CD8-positive, alpha-beta T cell (primary cell): ENCODE measurements at regions of chr4 and their contacts with region 1.

Region 1: DNA sequence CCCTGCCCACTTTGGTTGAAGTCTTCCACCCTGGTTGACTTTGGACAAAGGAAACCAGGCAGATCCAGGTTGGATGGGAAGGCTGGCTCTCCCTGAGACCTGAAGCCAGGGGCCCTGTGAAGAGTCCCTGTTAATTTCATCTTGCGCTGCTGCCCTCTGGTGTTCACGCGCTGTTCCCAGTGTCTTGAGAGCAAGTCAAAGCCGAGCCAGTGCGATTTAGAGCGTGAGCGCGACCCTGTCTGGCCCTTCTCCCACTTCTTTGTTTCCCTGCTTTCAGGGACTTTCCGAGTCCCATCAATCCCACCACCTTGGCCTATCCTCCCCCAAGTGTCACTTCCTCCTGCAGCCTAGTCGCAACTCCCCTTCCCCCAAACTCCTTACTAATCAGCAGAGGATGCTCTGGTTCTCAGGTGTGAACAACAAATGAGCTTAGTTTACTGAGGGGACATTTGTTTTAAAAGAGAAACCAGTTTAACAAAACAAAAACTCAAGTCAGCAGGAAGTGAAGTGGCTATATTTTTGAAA is 25.8 kb upstream of the CHRNA9 start:
- DNase-seq: peak; percentile 84 to 97 (median 92)
- ATAC-seq: peak; percentile 55
- H3K4me3 ChIP-seq: peak overlapping the region; percentile 28 to 38
- H3K4me3 Mint-ChIP-seq: peak overlapping the region; percentile 74
- H3K27ac ChIP-seq: peak overlapping the region; percentile 71 to 96
- H3K27ac Mint-ChIP-seq: peak overlapping the region; percentile 99
- H3K4me1 ChIP-seq: peaks cover 78% of the 10 kb centered on the region
- H3K4me1 Mint-ChIP-seq: peaks cover 82% of the 10 kb centered on the region
- H3K27me3 ChIP-seq: no peaks in the 10 kb centered on the region
- H3K27me3 Mint-ChIP-seq: no peaks in the 10 kb centered on the region
- CTCF ChIP-seq: peak; percentile 86

Region 2: GRCh38 chr4:40199999-40200874 is 109.1 kb before region 1 on chr4:
- CTCF ChIA-PET with region 1: interaction called, 59 read pairs
- POLR2A ChIA-PET with region 1: interaction called, 33 read pairs
- intact Hi-C with region 1: loop called in 1 of 2 experiments (anchors 1 kb)
- DNase-seq: peak in 7 of 9 experiments; percentile 41 to 88 (median 67)
- ATAC-seq: peak; percentile 24
- H3K4me3 ChIP-seq: peak overlapping the region; percentile 83 to 87
- H3K4me3 Mint-ChIP-seq: peak overlapping the region; percentile 100
- H3K27ac ChIP-seq: peak overlapping the region; percentile 89 to 96
- H3K27ac Mint-ChIP-seq: peak overlapping the region; percentile 100
- H3K4me1 ChIP-seq: peaks cover 25% of the 10 kb centered on the region
- H3K4me1 Mint-ChIP-seq: peaks cover 41% of the 10 kb centered on the region
- H3K27me3 ChIP-seq: no peaks in the 10 kb centered on the region
- H3K27me3 Mint-ChIP-seq: no peaks in the 10 kb centered on the region
- CTCF ChIP-seq: no peak

Region 3: DNA sequence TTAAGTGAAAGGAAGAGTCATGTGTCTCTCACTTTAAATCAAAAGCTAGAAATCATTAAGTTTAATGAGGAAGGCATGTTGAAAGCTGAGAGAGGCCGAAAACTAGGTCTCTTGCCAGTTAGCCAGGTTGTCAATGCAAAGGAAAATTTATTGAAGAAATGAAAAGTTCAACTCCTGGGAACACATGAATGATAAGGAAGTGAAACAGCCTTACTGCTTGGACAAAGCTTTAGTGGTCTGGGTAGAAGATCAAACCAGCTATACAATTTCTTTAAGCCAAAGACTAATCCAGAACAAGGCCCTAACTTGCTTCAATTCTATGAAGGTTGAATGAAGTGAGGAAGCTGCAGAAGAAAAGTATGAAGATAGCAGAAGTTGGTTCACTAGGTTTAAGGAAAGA is 87.6 kb before region 1 on chr4:
- CTCF ChIA-PET with region 1: interaction called, 118 read pairs
- POLR2A ChIA-PET with region 1: interaction called, 21 read pairs
- intact Hi-C with region 1: no loop called
- DNase-seq: no peak
- ATAC-seq: no peak
- H3K4me3 ChIP-seq: no peak overlapping the region
- H3K4me3 Mint-ChIP-seq: peak overlapping the region; percentile 71
- H3K27ac ChIP-seq: peak overlapping the region in 1 of 2 experiments; percentile 96
- H3K27ac Mint-ChIP-seq: peak overlapping the region; percentile 87
- H3K4me1 ChIP-seq: peaks cover 97% of the 10 kb centered on the region
- H3K4me1 Mint-ChIP-seq: peaks cover 93% of the 10 kb centered on the region
- H3K27me3 ChIP-seq: no peaks in the 10 kb centered on the region
- H3K27me3 Mint-ChIP-seq: no peaks in the 10 kb centered on the region
- CTCF ChIP-seq: no peak

Region 4: DNA sequence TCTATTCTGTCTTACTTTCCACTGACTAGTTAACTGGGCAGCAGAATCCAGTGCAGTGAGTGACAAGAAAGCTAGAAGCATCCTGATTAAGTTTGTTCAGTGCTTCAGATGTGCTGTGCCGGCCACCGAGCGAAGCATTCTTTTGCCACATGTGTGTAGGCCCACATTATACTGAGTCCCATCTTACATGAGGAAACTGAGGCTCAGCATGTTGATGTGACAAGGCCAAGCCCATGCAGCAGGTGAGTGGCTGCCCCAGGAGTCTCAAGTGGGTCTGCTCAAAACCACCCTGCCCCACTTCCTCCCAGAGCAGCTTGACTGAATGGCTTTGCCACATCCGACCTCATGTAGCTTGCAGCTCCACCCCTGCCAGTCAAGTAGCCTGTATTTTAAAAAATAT is 62.0 kb before region 1 on chr4:
- CTCF ChIA-PET with region 1: interaction called, 42 read pairs
- POLR2A ChIA-PET with region 1: interaction called, 11 read pairs
- intact Hi-C with region 1: loop called (anchors 1 to 2 kb)
- DNase-seq: peak; percentile 39 to 88 (median 72)
- ATAC-seq: peak; percentile 71
- H3K4me3 ChIP-seq: no peak overlapping the region
- H3K4me3 Mint-ChIP-seq: peak overlapping the region; percentile 36
- H3K27ac ChIP-seq: peak overlapping the region; percentile 52 to 98
- H3K27ac Mint-ChIP-seq: peak overlapping the region; percentile 90
- H3K4me1 ChIP-seq: peaks cover 76% of the 10 kb centered on the region
- H3K4me1 Mint-ChIP-seq: peaks cover 82% of the 10 kb centered on the region
- H3K27me3 ChIP-seq: no peaks in the 10 kb centered on the region
- H3K27me3 Mint-ChIP-seq: no peaks in the 10 kb centered on the region
- CTCF ChIP-seq: no peak

Region 5: GRCh38 chr4:40275065-40275730 is 34.1 kb before region 1 on chr4:
- CTCF ChIA-PET with region 1: interaction called, 11 read pairs
- POLR2A ChIA-PET with region 1: interaction called, 4 read pairs
- intact Hi-C with region 1: no loop called
- DNase-seq: peak in 1 of 9 experiments; percentile 39
- ATAC-seq: peak; percentile 44
- H3K4me3 ChIP-seq: no peak overlapping the region
- H3K4me3 Mint-ChIP-seq: peak overlapping the region; percentile 37
- H3K27ac ChIP-seq: peak overlapping the region in 1 of 2 experiments; percentile 27
- H3K27ac Mint-ChIP-seq: peak overlapping the region; percentile 87
- H3K4me1 ChIP-seq: peaks cover 31% of the 10 kb centered on the region
- H3K4me1 Mint-ChIP-seq: peaks cover 46% of the 10 kb centered on the region
- H3K27me3 ChIP-seq: no peaks in the 10 kb centered on the region
- H3K27me3 Mint-ChIP-seq: no peaks in the 10 kb centered on the region
- CTCF ChIP-seq: no peak

Region 6: GRCh38 chr4:40325189-40326019 is 16.1 kb after region 1 on chr4:
- CTCF ChIA-PET with region 1: interaction called, 59 read pairs
- POLR2A ChIA-PET with region 1: interaction called, 3 read pairs
- intact Hi-C with region 1: loop called in 1 of 2 experiments (anchors 1 kb)
- DNase-seq: peak in 8 of 9 experiments; percentile 47 to 89 (median 69)
- ATAC-seq: peak; percentile 100
- H3K4me3 ChIP-seq: no peak overlapping the region
- H3K4me3 Mint-ChIP-seq: no peak overlapping the region
- H3K27ac ChIP-seq: no peak overlapping the region
- H3K27ac Mint-ChIP-seq: peak overlapping the region; percentile 3
- H3K4me1 ChIP-seq: peaks cover 11% of the 10 kb centered on the region
- H3K4me1 Mint-ChIP-seq: peaks cover 30% of the 10 kb centered on the region
- H3K27me3 ChIP-seq: no peaks in the 10 kb centered on the region
- H3K27me3 Mint-ChIP-seq: no peaks in the 10 kb centered on the region
- CTCF ChIP-seq: peak; percentile 99

Region 7: GRCh38 chr4:40438384-40439026 is 129.2 kb after region 1 on chr4:
- CTCF ChIA-PET with region 1: no interaction called
- POLR2A ChIA-PET with region 1: no interaction called
- intact Hi-C with region 1: no loop called
- DNase-seq: no peak
- ATAC-seq: no peak
- H3K4me3 ChIP-seq: no peak overlapping the region
- H3K4me3 Mint-ChIP-seq: no peak overlapping the region
- H3K27ac ChIP-seq: no peak overlapping the region
- H3K27ac Mint-ChIP-seq: no peak overlapping the region
- H3K4me1 ChIP-seq: peaks cover 14% of the 10 kb centered on the region
- H3K4me1 Mint-ChIP-seq: peaks cover 23% of the 10 kb centered on the region
- H3K27me3 ChIP-seq: no peaks in the 10 kb centered on the region
- H3K27me3 Mint-ChIP-seq: no peaks in the 10 kb centered on the region
- CTCF ChIP-seq: no peak